ENCODE measurements at regions of chr17 and their contacts with region 1.

Region 1: DNA sequence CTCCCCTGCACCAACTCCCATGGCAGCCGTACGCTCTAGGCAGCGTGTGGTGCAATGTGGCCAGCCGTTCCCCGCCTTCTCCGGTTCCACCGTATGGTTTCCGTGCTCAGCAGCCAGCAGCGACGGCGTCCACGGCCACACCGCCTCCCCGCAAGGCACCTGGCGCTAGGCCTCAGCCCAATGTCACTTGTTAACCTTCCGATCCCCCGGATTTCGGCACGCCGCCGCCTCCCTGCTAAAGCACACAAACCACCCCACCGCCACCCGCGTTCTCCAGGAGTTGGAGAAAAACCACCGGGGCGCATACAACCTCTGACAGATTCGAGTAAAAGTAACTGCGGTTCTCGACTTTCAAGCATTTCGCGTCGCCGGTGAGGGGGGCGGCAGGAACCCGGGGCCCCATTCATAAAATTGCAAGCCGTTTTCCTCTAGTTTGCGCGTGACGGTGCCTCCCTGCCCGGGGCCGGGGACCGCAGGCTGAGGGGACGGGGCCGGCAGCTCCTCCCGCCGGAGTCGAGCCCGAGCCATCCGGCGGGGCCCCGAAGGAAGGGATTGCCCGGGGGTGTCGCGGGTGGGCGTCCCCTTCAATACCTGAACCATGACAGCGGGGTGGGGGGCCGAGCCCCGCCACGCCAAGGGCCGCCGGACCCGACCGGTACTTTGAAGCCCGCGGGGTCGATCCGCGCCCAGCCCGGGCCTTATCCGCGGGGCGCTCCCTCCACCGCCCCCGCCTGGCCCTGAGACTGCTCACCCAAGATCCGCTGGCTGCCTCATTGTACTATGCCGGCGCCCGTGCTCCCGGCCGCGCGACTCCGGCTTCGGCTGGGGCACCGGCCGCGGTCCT is at the start of gene TEX2:
- DNase-seq: peak; percentile 77
- H3K4me3 Mint-ChIP-seq: peak within 1 kb of the TSS; percentile 96
- H3K27ac Mint-ChIP-seq: peak within 1 kb of the TSS; percentile 91
- H3K4me1 Mint-ChIP-seq: peaks cover 32% of the 10 kb centered on the region
- H3K27me3 Mint-ChIP-seq: no peaks in the 10 kb centered on the region
- total RNA-seq, gene TEX2: 11.9 to 12.1 TPM

Region 2: GRCh38 chr17:64200080-64201032 is 62.3 kb before region 1 on chr17:
- CTCF ChIA-PET with region 1: no interaction called
- POLR2A ChIA-PET with region 1: no interaction called
- intact Hi-C with region 1: loop called (anchors 1 kb)
- DNase-seq: peak; percentile 52
- H3K4me3 Mint-ChIP-seq: no peak overlapping the region
- H3K27ac Mint-ChIP-seq: no peak overlapping the region
- H3K4me1 Mint-ChIP-seq: peaks cover 39% of the 10 kb centered on the region
- H3K27me3 Mint-ChIP-seq: no peaks in the 10 kb centered on the region

Region 3: DNA sequence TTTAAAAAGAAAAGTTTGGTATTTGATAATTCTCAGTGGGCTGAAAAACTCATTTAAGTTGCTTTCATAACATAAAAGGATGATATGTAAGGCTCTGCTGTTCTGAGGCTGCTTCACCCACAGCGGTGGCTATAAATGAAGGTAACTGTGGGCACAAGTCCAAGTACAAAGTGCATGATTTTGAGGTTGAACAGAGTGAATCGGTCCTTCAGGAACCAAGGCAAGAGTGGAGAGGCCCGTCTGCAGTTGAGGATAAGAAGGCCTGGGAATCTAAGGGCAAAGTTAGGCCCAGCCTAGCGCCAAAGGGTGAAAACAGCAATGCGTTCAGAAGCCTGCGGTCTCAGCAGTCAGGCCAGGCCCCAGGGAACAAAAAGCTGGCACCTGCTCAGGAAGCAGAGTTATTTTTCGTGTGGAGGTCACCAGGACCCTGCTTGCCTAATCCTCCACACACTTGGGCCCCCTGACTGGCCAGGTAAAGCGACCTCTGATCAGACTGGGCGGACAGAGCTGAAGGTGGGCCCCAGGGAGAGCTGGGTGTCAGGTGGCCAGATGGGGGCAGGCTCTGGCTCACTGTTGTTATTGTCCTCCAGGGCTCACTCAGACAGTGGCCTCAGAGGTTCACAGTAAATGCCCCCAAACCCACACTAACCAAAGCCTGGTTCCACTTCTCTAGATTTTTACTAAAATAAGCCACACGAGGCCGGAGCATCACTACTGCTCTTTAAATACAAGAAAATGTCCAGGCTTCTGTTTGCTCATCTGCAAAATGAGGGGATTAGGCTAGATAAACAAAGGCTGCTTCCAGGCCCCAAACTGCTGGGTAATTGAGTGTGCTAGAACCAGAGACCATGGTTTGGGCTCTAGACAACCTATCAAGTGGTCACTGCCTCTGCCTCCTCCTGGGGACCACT is 46.0 kb before region 1 on chr17:
- CTCF ChIA-PET with region 1: no interaction called
- POLR2A ChIA-PET with region 1: interaction called, 5 read pairs
- intact Hi-C with region 1: loop called (anchors 1 kb)
- DNase-seq: no peak
- H3K4me3 Mint-ChIP-seq: no peak overlapping the region
- H3K27ac Mint-ChIP-seq: no peak overlapping the region
- H3K4me1 Mint-ChIP-seq: peaks cover 20% of the 10 kb centered on the region
- H3K27me3 Mint-ChIP-seq: no peaks in the 10 kb centered on the region